ENCODE measurements at regions of chr16 and their contacts with region 1.

Region 1: GRCh38 chr16:30964574-30965226 is 7.1 kb downstream of the SETD1A start:
- DNase-seq: no peak
- ATAC-seq: no peak
- H3K4me3 ChIP-seq: no peak overlapping the region
- H3K27ac ChIP-seq: no peak overlapping the region
- H3K4me1 ChIP-seq: no peaks in the 10 kb centered on the region
- CTCF ChIP-seq: no peak
- EP300 ChIP-seq: no peak
- POLR2A ChIP-seq: no peak
- RAD21 ChIP-seq: no peak

Region 2: DNA sequence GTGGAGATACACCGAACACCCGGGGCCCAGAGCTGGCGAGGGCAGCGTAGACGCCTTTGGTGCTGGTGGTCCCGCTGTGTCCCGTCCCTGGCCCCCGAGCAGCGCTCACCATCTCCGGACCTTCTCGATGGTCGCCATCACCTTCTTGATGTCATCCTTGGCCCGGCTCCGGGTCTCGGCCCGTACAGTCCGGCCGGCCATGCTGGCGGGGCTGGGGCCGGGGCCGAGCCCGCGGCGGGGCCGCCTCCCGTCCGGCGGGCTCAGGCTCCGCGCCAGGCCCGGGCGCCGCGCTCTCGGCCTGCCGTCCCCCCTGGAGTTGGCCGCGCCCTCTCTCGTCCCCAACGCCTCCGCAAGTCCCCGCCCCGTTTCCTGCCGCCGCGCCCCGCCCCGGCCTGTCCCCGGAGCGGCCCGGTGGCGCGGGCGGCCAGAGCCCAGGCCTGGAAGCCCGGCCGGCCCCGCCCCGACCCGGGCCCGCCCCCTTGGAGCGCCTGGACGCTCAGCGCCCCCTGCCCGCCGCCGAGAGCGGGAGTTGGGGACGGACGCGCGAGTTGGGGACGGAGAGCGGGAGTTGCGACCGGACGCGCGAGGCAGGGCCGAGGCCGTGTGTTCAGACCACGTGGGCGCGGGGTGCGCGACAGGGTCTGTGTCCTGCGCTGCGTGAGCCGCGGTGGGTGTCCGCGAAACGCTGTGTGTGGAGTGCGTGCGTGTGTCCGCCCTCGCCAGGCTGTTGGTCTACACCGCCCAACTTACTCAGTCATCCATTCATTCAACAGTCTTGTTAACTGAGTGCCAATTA is 70.8 kb before region 1 on chr16 and contains the start of gene BCL7C:
- CTCF ChIA-PET with region 1: no interaction called
- POLR2A ChIA-PET with region 1: no interaction called
- DNase-seq: peak; percentile 67 to 93
- ATAC-seq: peak; percentile 86 to 87
- H3K4me3 ChIP-seq: peak within 1 kb of the TSS; percentile 56
- H3K27ac ChIP-seq: peak within 1 kb of the TSS; percentile 79 to 95
- H3K4me1 ChIP-seq: peaks cover 34% of the 10 kb centered on the region
- CTCF ChIP-seq: peak; percentile 67
- EP300 ChIP-seq: no peak
- POLR2A ChIP-seq: peak; percentile 81
- RAD21 ChIP-seq: peak in 1 of 2 experiments; percentile 49; a peak in 2 of 5 replicates
- polyA plus RNA-seq, gene BCL7C: 9.5 and 10.8 TPM in 2 replicates

Region 3: DNA sequence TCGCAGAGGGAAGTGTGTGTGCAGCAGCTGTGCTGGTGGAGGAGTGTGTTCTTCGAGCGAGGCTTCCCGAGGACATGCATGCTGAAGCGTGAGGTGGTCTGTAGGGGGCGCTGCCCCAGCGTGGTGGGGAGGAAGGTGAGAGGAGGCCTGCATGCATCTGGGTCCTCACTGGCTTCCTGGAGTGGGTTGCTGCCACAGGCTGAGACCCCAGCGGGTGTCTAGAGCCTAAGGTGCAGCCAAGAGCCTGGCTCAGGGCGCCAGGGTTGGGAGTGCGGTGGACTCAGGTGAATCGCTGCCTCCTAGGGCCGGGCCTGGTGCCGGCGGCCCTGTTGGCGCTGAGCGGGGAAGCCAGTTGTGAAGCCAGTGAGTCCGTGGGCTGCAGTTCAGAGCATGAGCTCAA is 12.8 kb after region 1 on chr16:
- CTCF ChIA-PET with region 1: interaction called, 75 read pairs
- POLR2A ChIA-PET with region 1: no interaction called
- DNase-seq: peak in 1 of 2 experiments; percentile 52
- ATAC-seq: peak; percentile 26 to 64; a peak in 3 of 6 replicates
- H3K4me3 ChIP-seq: no peak overlapping the region
- H3K27ac ChIP-seq: no peak overlapping the region
- H3K4me1 ChIP-seq: no peaks in the 10 kb centered on the region
- CTCF ChIP-seq: peak; percentile 14; the same call in 1 of the 3 replicates
- EP300 ChIP-seq: no peak
- POLR2A ChIP-seq: no peak
- RAD21 ChIP-seq: no peak